ENCODE measurements at regions of chr3 and their contacts with region 1.

Region 1: DNA sequence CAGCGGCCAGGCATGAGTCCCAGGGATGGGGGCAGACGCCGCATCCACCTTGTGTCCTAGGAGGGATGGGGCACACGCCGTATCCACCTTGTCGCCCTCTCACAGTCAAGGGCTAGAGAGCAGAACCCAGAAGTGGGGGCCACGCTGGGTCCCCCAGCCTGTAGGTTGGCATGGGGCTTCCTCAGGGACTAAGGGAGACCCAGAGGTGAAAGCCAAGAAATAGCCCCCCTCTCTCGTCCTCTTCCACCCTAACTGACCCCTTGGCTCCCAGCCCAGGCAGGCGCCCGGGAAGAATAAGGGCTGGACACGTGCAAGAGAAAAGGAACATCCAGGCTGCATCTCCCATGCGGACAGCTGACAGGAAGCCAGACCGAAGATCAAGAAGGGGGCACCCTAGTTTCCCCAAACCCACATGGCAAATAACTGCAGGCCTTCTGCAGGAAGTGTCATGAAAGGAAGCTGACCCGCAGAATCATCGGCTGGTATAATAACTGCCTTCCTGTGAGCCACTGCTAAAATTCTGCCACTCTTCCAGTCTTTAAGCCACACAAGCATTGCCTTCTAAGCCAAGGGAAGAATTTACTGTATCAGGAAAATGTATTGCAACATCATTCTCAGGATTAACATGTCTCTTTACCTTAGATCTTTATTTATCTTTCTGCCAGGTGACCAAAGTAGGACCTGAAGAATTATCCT is 38.5 kb upstream of the TFRC start:
- DNase-seq: no peak

Region 2: GRCh38 chr3:196073188-196073838 is 47.1 kb before region 1 on chr3:
- in situ Hi-C with region 1: loop called (anchors 5 kb)
- DNase-seq: peak; percentile 89

Region 3: GRCh38 chr3:196149831-196150521 is 29.6 kb after region 1 on chr3:
- in situ Hi-C with region 1: no loop called
- DNase-seq: no peak

Region 4: GRCh38 chr3:196179380-196180308 is 59.2 kb after region 1 on chr3:
- in situ Hi-C with region 1: loop called (anchors 5 kb)
- DNase-seq: peak; percentile 99